CD4-positive, alpha-beta T cell (primary cell): ENCODE measurements at regions of chr19 and their contacts with region 1.

Region 1: GRCh38 chr19:9381367-9381785 is 18.6 kb downstream of the ZNF177 start:
- DNase-seq: no peak
- ATAC-seq: no peak
- H3K4me3 ChIP-seq: no peak overlapping the region
- H3K4me3 Mint-ChIP-seq: no peak overlapping the region
- H3K27ac ChIP-seq: no peak overlapping the region
- H3K27ac Mint-ChIP-seq: no peak overlapping the region
- H3K4me1 ChIP-seq: no peaks in the 10 kb centered on the region
- H3K4me1 Mint-ChIP-seq: no peaks in the 10 kb centered on the region
- H3K27me3 ChIP-seq: no peaks in the 10 kb centered on the region
- H3K27me3 Mint-ChIP-seq: no peaks in the 10 kb centered on the region
- CTCF ChIP-seq: no peak

Region 2: GRCh38 chr19:9348671-9349070 is 32.7 kb before region 1 on chr19:
- CTCF ChIA-PET with region 1: no interaction called
- POLR2A ChIA-PET with region 1: no interaction called
- intact Hi-C with region 1: loop called in 1 of 2 experiments (anchors 5 kb)
- DNase-seq: no peak
- ATAC-seq: no peak
- H3K4me3 ChIP-seq: no peak overlapping the region
- H3K4me3 Mint-ChIP-seq: no peak overlapping the region
- H3K27ac ChIP-seq: no peak overlapping the region
- H3K27ac Mint-ChIP-seq: no peak overlapping the region
- H3K4me1 ChIP-seq: no peaks in the 10 kb centered on the region
- H3K4me1 Mint-ChIP-seq: no peaks in the 10 kb centered on the region
- H3K27me3 ChIP-seq: no peaks in the 10 kb centered on the region
- H3K27me3 Mint-ChIP-seq: no peaks in the 10 kb centered on the region
- CTCF ChIP-seq: no peak

Region 3: DNA sequence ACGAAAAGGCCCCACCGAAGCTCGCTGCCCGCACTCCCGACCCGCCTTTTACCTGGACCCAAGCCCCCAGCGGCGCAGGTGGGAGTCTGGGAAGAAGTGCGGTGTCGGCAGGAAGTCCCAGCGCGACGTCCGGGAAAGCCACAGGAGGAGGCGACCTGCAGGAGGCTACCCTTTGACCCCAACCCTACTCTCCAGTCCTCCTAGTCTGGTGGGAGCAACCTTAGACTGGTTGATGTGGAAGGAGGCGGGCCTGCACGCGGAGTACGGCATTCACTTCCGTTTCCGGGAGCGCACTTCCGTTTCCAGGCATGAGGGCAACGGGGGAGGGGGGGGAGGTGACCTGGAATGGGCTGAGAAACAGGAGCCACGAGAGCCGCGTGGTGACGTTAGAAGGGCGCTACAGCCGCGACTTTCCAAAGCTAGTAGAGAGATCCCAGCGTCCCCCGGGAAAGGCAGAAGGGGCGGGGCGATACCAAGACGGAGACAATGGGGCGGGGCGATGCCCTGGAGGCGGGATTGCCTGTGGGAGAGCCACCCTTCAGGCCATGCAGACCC is 25.5 kb after region 1 on chr19:
- CTCF ChIA-PET with region 1: no interaction called
- POLR2A ChIA-PET with region 1: no interaction called
- intact Hi-C with region 1: no loop called
- DNase-seq: peak; percentile 1 to 71 (median 26)
- ATAC-seq: peak; percentile 51
- H3K4me3 ChIP-seq: peak overlapping the region; percentile 59
- H3K4me3 Mint-ChIP-seq: peak overlapping the region; percentile 82
- H3K27ac ChIP-seq: no peak overlapping the region
- H3K27ac Mint-ChIP-seq: no peak overlapping the region
- H3K4me1 ChIP-seq: peaks cover 15% of the 10 kb centered on the region
- H3K4me1 Mint-ChIP-seq: peaks cover 24% of the 10 kb centered on the region
- H3K27me3 ChIP-seq: no peaks in the 10 kb centered on the region
- H3K27me3 Mint-ChIP-seq: no peaks in the 10 kb centered on the region
- CTCF ChIP-seq: no peak